ENCODE measurements at regions of chr3 and their contacts with region 1.

Region 1: DNA sequence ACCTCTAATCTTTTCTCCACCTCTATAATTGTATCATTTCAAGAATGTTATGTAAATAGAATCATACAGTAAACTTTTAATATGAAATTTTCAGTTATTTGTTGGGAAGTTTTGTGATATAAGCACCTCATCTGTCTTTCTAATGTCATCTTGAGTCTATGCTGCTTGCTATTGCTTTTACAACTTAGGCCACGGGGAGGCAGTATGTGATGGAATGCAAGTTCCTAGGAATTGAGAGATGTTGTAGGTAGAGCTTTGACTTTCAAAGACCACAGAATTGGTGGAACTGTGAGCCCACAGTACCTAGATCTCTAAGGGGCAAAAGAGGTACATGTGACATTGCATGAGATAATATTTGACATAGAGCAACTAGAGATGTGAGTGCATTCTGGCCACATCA is 328.3 kb downstream of the MFSD1 start:
- DNase-seq: peak in 6 of 7 donors; percentile 11 to 57 (median 34)
- H3K4me3 ChIP-seq: no peak overlapping the region
- H3K27ac ChIP-seq: no peak overlapping the region
- H3K4me1 ChIP-seq: peaks cover 0 to 8% of the 10 kb centered on the region in 2 donors
- H3K27me3 ChIP-seq: no peaks in the 10 kb centered on the region
- CTCF ChIP-seq: peak in 5 of 6 experiments; percentile 23 to 45 (median 38)
- POLR2A ChIP-seq: no peak

Region 2: GRCh38 chr3:158845765-158846350 is 284.2 kb before region 1 on chr3:
- intact Hi-C with region 1: loop called in 1 of 2 experiments (anchors 10 kb)
- DNase-seq: peak in 1 of 7 donors; percentile 16
- H3K4me3 ChIP-seq: no peak overlapping the region
- H3K27ac ChIP-seq: no peak overlapping the region
- H3K4me1 ChIP-seq: no peaks in the 10 kb centered on the region
- H3K27me3 ChIP-seq: no peaks in the 10 kb centered on the region
- CTCF ChIP-seq: peak; percentile 52 to 75 (median 64)
- POLR2A ChIP-seq: no peak

Region 3: DNA sequence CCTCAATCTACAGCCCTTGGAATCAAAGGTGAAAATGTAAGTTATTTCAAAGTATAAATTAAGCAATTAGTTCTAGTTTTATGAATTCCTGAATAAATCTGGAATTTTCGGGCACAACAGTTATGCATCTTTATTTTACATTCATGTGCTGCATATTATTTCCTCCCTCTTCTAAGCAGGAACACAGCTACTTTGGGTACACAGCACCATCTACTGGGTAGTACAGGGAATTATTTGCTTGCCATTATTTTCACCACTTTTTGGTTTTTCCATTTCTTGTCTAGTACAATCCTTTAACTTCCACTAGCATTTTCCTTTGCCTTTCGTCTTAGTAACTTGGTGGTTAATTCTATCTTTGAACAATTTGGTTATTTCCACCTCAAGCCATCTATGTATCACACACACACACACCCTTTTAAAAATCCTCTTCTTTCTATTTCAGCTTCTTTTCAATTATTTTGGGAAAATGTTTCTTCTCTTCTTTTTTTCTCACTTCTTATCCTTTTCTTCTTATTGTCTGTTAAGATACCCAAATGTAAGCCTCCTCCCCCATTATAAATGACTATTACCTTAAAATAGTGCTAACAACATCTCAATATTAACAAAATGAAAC is 122.8 kb after region 1 on chr3:
- intact Hi-C with region 1: loop called in 1 of 2 experiments (anchors 10 kb)
- DNase-seq: no peak
- H3K4me3 ChIP-seq: no peak overlapping the region
- H3K27ac ChIP-seq: no peak overlapping the region
- H3K4me1 ChIP-seq: no peaks in the 10 kb centered on the region
- H3K27me3 ChIP-seq: no peaks in the 10 kb centered on the region
- CTCF ChIP-seq: peak in 5 of 6 experiments; percentile 46 to 77 (median 67)
- POLR2A ChIP-seq: no peak

Region 4: DNA sequence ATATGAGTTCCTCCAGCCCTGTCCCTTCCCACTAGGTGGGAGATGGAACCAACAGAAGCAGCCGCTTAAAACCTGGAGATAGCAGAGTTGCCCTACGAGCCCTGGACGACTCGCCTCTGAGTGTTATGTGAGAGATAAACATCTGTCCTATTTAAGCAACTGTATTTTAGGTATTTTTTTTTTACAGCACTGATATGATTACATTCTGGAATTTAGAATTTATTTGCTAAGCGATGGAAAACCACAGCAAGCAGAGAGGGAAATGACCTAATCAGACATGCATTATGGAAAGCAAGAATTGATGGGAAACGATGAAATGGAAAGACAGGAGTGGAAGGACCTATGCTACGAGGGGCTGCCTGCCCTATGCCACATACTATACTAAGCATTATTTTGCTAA is 479.5 kb after region 1 on chr3:
- intact Hi-C with region 1: no loop called
- DNase-seq: no peak
- H3K4me3 ChIP-seq: no peak overlapping the region
- H3K27ac ChIP-seq: no peak overlapping the region
- H3K4me1 ChIP-seq: no peaks in the 10 kb centered on the region
- H3K27me3 ChIP-seq: no peaks in the 10 kb centered on the region
- CTCF ChIP-seq: no peak
- POLR2A ChIP-seq: no peak

Measured in adrenal gland (tissue), 19 donors.